Cardiac septum (tissue), 1 donor: ENCODE measurements at regions of chr4 and their contacts with region 1.

Region 1: GRCh38 chr4:124105212-124105611 is 607.3 kb downstream of the ANKRD50 start:
- DNase-seq: no peak

Region 2: DNA sequence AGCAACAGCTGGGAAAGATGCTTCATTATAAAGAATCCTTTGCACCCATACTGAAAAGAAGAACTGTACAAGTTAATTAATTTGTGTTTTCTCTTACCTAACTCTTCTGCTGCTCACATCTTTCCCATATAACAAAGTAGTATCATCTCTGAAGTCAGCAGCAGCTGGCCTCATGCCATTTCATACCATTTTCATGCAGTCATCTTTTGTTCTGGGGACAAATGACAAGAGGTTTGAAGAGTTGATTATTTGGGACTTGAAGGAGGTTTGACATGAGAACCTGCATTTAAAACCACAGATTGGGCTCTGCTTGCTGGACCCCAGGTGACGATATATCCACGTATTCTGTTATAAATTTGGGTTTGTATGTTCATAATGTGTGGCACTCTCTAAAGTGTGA is 278.3 kb before region 1 on chr4:
- intact Hi-C with region 1: loop called (anchors 5 kb)
- DNase-seq: no peak

Region 3: GRCh38 chr4:123869286-123870060 is 235.7 kb before region 1 on chr4:
- intact Hi-C with region 1: no loop called
- DNase-seq: no peak

Region 4: GRCh38 chr4:124085561-124086180 is 19.5 kb before region 1 on chr4:
- intact Hi-C with region 1: no loop called
- DNase-seq: no peak